ENCODE measurements at regions of chr11 and their contacts with region 1.

Region 1: GRCh38 chr11:57324886-57325734 is at the start of gene TNKS1BP1:
- DNase-seq: peak; percentile 87 to 99 (median 96)

Region 2: DNA sequence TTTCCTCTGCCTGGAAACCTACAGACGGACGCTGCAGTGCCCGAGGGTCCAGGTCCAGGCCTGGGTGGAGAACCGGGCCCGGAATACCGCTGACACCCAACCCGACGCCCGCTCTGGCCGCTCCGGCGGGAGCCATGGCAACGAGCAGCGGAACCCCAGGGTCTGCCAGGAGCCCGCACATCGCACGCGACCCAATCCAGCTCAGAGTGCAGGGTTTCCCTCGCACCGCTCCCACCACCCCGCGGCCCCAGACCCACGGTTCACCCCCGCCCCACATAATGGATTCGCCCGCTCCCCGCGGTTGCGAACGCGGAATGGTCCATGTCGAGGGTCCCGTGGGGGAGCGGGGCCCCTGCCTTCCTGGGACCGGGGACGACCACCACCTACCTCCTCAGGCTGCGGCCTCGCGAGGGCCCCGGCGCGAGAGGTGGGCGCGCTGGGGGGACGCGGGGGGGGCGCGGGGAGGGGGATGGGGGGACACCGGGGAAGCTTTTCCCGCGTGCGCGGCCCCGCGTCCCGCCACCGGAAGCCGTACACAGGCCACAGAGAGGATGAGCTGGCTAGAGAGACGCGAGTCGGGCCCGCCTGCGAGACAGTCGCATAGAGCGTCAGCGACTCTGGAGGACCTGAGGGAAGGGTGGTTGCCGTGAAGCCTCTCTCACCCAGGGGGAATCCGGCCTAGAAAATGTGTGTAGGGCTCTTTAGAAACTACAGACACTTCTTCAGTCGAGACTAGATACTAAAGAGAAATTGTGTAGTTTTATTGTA is 10.4 kb after region 1 on chr11 and contains the start of gene SSRP1:
- intact Hi-C with region 1: loop called (anchors 1 kb)
- DNase-seq: peak; percentile 80 to 99 (median 92)

Measured in posterior cingulate gyrus (tissue), 11 donors.